Heart right ventricle (tissue), 16 donors: ENCODE measurements at regions of chr19 and their contacts with region 1.

Region 1: GRCh38 chr19:40416918-40417642 is 3.9 kb upstream of the PRX start:
- DNase-seq: peak; percentile 60 to 81
- ATAC-seq: peak in 7 of 8 donors; percentile 25 to 51 (median 29)
- H3K4me3 ChIP-seq: peak overlapping the region in 1 of 10 donors; percentile 14
- H3K27ac ChIP-seq: peak overlapping the region; percentile 75 to 96 (median 84)
- H3K4me1 ChIP-seq: peaks cover 12 to 61% (median 41%) of the 10 kb centered on the region in 9 donors
- H3K27me3 ChIP-seq: no peaks in the 10 kb centered on the region
- CTCF ChIP-seq: no peak

Region 2: GRCh38 chr19:40472516-40472915 is 55.4 kb after region 1 on chr19:
- intact Hi-C with region 1: no loop called
- DNase-seq: no peak
- ATAC-seq: no peak
- H3K4me3 ChIP-seq: no peak overlapping the region
- H3K27ac ChIP-seq: no peak overlapping the region
- H3K4me1 ChIP-seq: peaks cover 0 to 2% (median under 1%) of the 10 kb centered on the region in 9 donors
- H3K27me3 ChIP-seq: peaks cover 0 to 14% (median 0%) of the 10 kb centered on the region in 7 donors
- CTCF ChIP-seq: no peak

Region 3: DNA sequence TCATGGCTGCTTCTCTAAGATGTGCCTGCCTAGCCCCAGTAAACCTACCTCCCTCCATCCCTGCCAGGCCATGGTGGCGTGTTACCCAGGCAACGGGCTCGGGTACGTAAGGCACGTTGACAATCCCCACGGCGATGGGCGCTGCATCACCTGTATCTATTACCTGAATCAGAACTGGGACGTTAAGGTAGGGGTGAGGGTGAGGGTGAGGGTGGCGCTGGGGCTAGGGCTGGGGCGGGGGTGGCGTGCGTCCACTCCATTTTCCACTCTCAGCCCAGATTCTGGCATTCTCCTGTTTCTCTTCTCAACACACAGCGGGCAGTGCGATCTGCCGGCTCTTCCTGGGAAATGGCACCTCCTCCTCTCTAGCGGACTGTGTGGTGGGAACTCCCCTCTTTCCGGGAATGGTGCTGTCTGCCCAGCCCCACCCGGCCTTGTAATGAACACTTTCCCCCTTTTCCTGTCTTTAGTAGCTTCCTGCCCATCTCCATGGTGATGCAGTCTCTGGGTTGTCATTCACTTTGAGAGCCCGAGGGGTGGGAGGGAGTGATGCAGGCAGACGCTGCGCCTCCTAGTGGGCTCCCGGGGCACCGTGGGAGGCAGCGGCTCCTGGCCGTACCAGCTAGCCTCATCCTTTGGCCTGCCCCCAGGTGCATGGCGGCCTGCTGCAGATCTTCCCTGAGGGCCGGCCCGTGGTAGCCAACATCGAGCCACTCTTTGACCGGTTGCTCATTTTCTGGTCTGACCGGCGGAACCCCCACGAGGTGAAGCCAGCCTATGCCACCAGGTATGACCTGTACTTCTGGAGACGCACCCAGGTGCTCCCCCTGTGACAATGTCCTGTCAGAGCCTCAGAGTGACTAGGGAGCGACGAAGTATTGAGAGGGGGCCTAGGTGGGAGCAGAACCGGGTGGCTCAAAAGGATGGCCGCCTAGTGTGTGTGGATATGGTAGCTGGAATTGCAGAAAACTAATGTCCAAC is 389.7 kb after region 1 on chr19:
- intact Hi-C with region 1: loop called in 1 of 10 experiments (anchors 10 kb)
- DNase-seq: peak; percentile 80 to 92
- ATAC-seq: peak; percentile 30 to 72 (median 58)
- H3K4me3 ChIP-seq: peak overlapping the region in 6 of 10 donors; percentile 2 to 32 (median 24)
- H3K27ac ChIP-seq: peak overlapping the region; percentile 42 to 99 (median 94)
- H3K4me1 ChIP-seq: peaks cover 47 to 93% (median 89%) of the 10 kb centered on the region in 9 donors
- H3K27me3 ChIP-seq: no peaks in the 10 kb centered on the region
- CTCF ChIP-seq: peak; percentile 61 to 94 (median 87)